Vagina (tissue), 2 donors: ENCODE measurements at regions of chr1 and their contacts with region 1.

Region 1: GRCh38 chr1:221371705-221372104 is 370.2 kb downstream of the DUSP10 start:
- DNase-seq: no peak
- H3K4me3 ChIP-seq: no peak overlapping the region
- H3K27ac ChIP-seq: no peak overlapping the region
- H3K4me1 ChIP-seq: no peaks in the 10 kb centered on the region
- H3K27me3 ChIP-seq: no peaks in the 10 kb centered on the region
- CTCF ChIP-seq: no peak
- POLR2A ChIP-seq: no peak

Region 2: GRCh38 chr1:221284028-221284427 is 87.7 kb before region 1 on chr1:
- intact Hi-C with region 1: loop called (anchors 10 kb)
- DNase-seq: no peak
- H3K4me3 ChIP-seq: no peak overlapping the region
- H3K27ac ChIP-seq: no peak overlapping the region
- H3K4me1 ChIP-seq: peaks cover 11% of the 10 kb centered on the region
- H3K27me3 ChIP-seq: no peaks in the 10 kb centered on the region
- CTCF ChIP-seq: no peak
- POLR2A ChIP-seq: no peak

Region 3: GRCh38 chr1:221419513-221420088 is 47.9 kb after region 1 on chr1:
- intact Hi-C with region 1: no loop called
- DNase-seq: no peak
- H3K4me3 ChIP-seq: no peak overlapping the region
- H3K27ac ChIP-seq: no peak overlapping the region
- H3K4me1 ChIP-seq: no peaks in the 10 kb centered on the region
- H3K27me3 ChIP-seq: no peaks in the 10 kb centered on the region
- CTCF ChIP-seq: no peak
- POLR2A ChIP-seq: no peak

Region 4: GRCh38 chr1:222243902-222244301 is 872.2 kb after region 1 on chr1:
- intact Hi-C with region 1: no loop called
- DNase-seq: no peak
- H3K4me3 ChIP-seq: no peak overlapping the region
- H3K27ac ChIP-seq: no peak overlapping the region
- H3K4me1 ChIP-seq: no peaks in the 10 kb centered on the region
- H3K27me3 ChIP-seq: no peaks in the 10 kb centered on the region
- CTCF ChIP-seq: no peak
- POLR2A ChIP-seq: no peak